PC-3 (cell line): ENCODE measurements at regions of chr12 and their contacts with region 1.

Region 1: DNA sequence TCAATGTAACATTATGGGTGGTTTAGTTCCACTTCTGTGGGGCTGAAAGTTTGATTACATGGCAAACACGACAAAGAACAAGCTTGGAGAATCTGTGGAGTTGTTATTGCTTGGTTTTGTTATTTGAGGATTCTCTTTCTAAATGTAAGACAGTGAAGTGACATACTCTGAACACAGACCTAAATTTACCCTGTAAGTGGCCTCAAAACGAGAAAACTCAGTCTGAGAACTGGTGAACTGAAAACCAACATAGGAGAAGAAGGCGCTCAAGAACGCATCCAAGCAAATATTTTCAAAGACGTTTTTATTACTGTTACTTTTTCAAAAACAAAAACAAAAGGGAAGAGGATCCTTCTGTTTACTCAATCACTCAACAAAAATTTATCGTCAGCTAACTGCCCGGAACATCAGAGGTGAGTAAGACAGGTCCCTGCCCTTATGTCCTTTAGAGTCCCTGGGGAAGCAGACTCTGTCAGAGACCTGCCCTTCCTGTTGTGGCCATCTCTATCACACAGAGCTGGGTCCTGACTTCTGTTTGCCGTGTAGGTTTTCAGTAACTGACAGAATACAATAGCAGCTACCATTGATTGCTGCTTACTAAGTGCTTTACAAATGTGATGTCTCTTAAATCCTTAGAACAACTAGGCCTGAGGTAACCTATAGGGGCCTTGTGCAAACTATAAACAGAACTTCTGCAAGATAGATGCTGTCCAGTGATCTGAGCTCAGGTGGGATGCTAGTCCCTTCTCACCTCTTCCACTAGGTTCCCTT is 79.3 kb upstream of the C12orf71 start:
- DNase-seq: peak; percentile 88
- ATAC-seq: peak; percentile 97
- H3K4me3 ChIP-seq: no peak overlapping the region
- H3K27ac ChIP-seq: peak overlapping the region; percentile 29
- H3K4me1 ChIP-seq: peaks cover 30% of the 10 kb centered on the region
- H3K27me3 ChIP-seq: no peaks in the 10 kb centered on the region
- CTCF ChIP-seq: no peak

Region 2: DNA sequence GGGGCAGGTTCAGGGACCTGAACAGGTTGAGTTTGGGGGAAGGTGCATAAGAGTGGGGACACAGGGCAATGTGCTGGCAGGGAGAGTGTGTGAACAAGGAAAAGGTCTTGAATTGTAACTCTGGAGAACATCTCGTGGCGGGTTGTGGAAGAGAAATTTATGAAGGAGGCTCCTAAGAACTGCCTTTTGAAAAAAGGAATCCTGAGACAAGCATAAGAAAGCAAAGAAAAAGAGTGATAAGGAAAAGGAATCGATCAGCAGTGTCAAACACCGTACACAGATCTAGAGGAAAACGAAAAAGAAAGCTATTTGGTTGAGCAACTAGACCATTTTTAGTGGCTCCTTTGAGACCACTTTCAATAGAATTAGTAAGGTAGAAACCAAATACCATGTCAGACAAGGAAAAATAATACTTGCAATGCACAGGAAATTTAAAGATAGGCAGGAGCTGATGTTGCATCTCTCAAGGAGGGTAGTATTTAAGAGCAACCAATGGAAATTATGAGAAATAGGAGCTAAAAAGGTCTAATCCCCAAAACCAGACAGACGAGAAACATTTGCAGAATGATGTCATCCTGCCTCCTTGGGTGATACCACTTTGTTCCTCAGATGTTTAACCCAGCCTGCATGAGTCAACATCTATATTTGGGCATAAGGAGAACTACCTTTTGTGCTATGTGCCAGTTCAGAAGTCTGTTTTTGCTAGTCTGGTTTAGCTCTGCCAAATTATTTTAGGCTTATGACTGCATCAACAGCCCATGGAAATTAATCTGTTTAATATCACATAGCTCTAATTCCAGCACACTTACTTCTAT is 18.0 kb after region 1 on chr12:
- CTCF ChIA-PET with region 1: interaction called, 4 read pairs
- POLR2A ChIA-PET with region 1: no interaction called
- intact Hi-C with region 1: loop called (anchors 2 kb)
- DNase-seq: peak; percentile 100
- ATAC-seq: peak; percentile 86
- H3K4me3 ChIP-seq: peak overlapping the region; percentile 7; the same call in 1 of the 2 replicates
- H3K27ac ChIP-seq: peak overlapping the region; percentile 73
- H3K4me1 ChIP-seq: peaks cover 61% of the 10 kb centered on the region
- H3K27me3 ChIP-seq: no peaks in the 10 kb centered on the region
- CTCF ChIP-seq: no peak

Region 3: DNA sequence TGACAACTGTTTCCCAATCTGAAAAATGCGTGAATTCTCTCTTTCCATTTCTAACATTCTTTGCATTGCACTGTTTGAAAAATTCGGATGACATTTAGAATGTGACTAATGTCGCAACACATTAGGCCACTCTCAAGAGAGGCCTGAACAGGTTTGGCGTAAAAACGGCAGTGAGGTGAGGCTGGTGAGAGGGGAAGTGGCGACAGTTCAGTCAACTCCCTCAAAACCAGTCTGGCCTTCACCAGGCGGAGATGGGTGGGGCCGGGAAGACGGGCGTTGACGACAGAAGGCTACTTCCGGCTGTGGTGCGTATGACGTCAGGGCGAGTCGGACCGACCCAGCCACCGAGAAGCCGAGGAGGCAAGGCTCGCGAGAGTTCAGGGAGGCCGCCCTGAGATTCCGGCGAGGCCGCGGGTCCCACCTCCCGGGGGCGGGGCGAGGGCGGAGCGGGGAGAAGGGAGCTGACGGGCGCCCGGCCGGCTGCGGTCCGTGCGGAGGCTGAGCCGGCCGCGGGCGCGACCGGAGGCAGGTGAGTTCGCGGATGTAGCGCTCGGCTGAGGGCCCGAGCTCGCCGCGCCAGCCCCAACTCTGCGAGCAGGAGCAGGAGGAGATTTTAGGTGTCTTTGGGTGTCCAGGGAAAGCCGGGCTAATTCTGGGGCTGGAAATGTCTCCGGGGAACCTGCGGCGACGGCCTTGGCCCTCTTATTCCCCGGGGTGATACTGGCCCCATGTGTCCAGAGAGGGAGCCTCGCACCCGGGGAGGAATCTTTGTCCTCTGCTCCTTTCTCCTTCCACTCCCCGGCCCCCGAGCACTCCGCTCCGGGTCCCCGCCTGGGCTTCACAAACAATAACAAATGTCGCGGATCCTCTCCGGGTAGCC is 82.4 kb after region 1 on chr12 and contains the start of gene STK38L:
- CTCF ChIA-PET with region 1: no interaction called
- POLR2A ChIA-PET with region 1: no interaction called
- intact Hi-C with region 1: loop called (anchors 5 kb)
- DNase-seq: peak; percentile 98
- ATAC-seq: peak; percentile 94
- H3K4me3 ChIP-seq: peak within 1 kb of the TSS; percentile 80
- H3K27ac ChIP-seq: peak within 1 kb of the TSS; percentile 40
- H3K4me1 ChIP-seq: peaks cover 28% of the 10 kb centered on the region
- H3K27me3 ChIP-seq: no peaks in the 10 kb centered on the region
- CTCF ChIP-seq: peak; percentile 51; the same call in 1 of the 2 replicates
- total RNA-seq, gene STK38L: 19.4 and 32.3 TPM in 2 replicates